MCF 10A (cell line): ENCODE measurements at regions of chr17 and their contacts with region 1.

Region 1: DNA sequence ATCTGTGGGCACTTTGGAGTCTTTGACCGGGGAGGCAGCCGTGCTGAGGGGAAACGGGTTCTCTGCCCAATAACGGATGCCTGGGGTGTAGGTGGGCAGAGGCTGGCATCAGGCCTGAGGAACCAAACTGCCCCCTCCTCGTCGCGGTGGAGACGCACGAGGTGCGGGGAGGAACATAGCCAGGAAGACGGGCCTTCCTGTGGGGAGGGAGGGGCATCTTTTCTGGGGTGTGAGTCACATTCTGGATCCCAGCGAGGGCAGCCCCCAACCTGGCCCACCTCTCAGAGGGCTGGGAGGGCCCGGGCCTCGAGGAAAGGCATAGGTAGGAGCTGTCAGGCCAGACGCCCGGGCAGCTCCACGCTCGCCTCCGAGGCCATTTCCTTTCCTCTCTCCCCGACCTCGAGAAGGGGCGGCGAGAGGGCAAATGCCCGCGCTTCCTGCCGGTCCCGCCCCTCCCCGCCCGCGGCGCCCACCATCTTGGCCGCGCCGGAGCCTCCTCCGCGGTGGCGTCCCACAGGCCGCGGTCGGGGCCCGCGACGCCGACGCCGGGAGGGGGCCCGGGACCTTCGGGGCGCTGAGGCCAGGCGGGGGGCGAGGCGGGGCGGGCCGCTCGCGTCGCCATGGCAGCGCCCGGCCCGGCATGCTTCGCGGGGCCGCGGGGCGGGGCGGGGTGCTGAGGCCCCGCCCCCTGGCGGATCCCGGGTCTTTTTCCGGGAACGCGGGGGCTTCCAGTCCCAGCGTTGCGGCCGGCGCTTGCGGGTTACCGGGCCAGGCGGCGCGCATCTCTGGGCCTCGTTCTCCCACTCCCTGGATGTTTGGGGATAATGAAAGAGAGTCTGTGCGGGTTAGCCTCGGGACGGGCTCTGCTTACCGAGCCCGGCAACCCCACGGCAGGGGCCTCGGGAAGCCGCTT is 13.2 kb downstream of the RAI1 start:
- DNase-seq: peak; percentile 73
- H3K4me3 Mint-ChIP-seq: peak overlapping the region; percentile 82
- H3K27ac Mint-ChIP-seq: peak overlapping the region; percentile 97
- H3K4me1 Mint-ChIP-seq: peaks cover 55% of the 10 kb centered on the region
- H3K27me3 Mint-ChIP-seq: no peaks in the 10 kb centered on the region
- CTCF ChIP-seq: no peak

Region 2: GRCh38 chr17:17739388-17740066 is 45.1 kb after region 1 on chr17:
- CTCF ChIA-PET with region 1: interaction called, 3 read pairs
- POLR2A ChIA-PET with region 1: interaction called, 5 read pairs
- intact Hi-C with region 1: loop called (anchors 5 kb)
- DNase-seq: peak; percentile 50
- H3K4me3 Mint-ChIP-seq: peak overlapping the region; percentile 52
- H3K27ac Mint-ChIP-seq: peak overlapping the region; percentile 81
- H3K4me1 Mint-ChIP-seq: peaks cover 59% of the 10 kb centered on the region
- H3K27me3 Mint-ChIP-seq: no peaks in the 10 kb centered on the region
- CTCF ChIP-seq: no peak

Region 3: DNA sequence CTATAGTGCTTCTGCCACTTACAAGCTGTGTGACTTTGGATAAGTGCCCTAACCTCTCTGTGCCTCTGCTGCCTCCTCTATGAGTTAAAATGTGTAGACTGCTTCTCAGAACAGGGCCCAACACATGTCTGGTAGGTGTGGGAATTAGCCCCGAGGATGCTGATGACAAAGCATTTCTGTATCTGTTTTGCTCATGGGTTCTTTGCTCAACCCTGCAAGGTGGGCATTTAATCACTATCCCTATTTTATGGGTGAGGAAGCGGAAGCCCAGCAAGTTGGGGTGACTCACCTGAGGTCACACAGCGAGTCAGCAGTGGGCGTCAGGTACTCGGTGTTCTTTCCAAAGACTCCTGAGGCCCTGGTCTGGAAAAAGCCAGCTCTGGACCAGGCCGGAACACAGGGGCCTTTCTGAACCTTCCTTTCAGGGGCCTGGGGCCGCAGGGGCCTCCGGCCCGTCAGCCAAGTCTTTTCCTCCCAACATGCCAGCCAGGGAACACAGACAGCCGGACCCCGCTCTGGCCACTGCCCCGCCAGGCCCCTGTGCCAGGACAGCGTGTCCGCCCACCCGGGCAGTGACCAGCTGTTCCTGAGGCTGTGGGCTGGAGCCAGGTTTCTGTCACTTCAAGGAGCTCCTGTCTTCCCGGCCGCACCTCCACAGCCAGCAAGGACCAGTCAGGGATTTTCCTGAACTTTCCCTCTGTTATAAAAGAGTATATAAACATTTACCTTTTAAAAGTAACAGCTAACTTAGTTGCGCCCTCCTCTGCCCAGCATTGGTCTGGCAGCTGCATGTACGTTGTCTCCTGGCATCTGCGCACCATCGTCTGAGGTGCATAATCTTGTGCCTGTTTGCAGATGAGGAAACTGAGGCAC is 79.8 kb after region 1 on chr17:
- CTCF ChIA-PET with region 1: interaction called, 6 read pairs
- POLR2A ChIA-PET with region 1: interaction called, 12 read pairs
- intact Hi-C with region 1: no loop called
- DNase-seq: peak; percentile 86
- H3K4me3 Mint-ChIP-seq: no peak overlapping the region
- H3K27ac Mint-ChIP-seq: peak overlapping the region; percentile 92
- H3K4me1 Mint-ChIP-seq: peaks cover 31% of the 10 kb centered on the region
- H3K27me3 Mint-ChIP-seq: no peaks in the 10 kb centered on the region
- CTCF ChIP-seq: peak; percentile 73